ENCODE measurements at regions of chr11 and their contacts with region 1.

Region 1: GRCh38 chr11:60615497-60615896 is 83.9 kb upstream of the MS4A8 start:
- DNase-seq: no peak
- ATAC-seq: no peak
- H3K4me3 ChIP-seq: no peak overlapping the region
- H3K27ac ChIP-seq: no peak overlapping the region
- H3K4me1 ChIP-seq: peaks cover 0 to 6% of the 10 kb centered on the region in 2 experiments; a peak in 2 of 4 replicates
- H3K27me3 ChIP-seq: no peaks in the 10 kb centered on the region
- CTCF ChIP-seq: no peak
- POLR2A ChIP-seq: no peak
- RAD21 ChIP-seq: no peak

Region 2: GRCh38 chr11:60345489-60345888 is 270.0 kb before region 1 on chr11:
- CTCF ChIA-PET with region 1: interaction called, 4 read pairs
- POLR2A ChIA-PET with region 1: no interaction called
- RAD21 ChIA-PET with region 1: no interaction called
- intact Hi-C with region 1: loop called (anchors 5 kb)
- DNase-seq: peak; percentile 21
- ATAC-seq: peak; percentile 78
- H3K4me3 ChIP-seq: no peak overlapping the region
- H3K27ac ChIP-seq: no peak overlapping the region
- H3K4me1 ChIP-seq: no peaks in the 10 kb centered on the region
- H3K27me3 ChIP-seq: no peaks in the 10 kb centered on the region; the same call in 1 of the 2 replicates
- CTCF ChIP-seq: peak; percentile 41 to 76 (median 75); a peak in 5 of 6 replicates
- POLR2A ChIP-seq: no peak
- RAD21 ChIP-seq: peak; percentile 39

Region 3: DNA sequence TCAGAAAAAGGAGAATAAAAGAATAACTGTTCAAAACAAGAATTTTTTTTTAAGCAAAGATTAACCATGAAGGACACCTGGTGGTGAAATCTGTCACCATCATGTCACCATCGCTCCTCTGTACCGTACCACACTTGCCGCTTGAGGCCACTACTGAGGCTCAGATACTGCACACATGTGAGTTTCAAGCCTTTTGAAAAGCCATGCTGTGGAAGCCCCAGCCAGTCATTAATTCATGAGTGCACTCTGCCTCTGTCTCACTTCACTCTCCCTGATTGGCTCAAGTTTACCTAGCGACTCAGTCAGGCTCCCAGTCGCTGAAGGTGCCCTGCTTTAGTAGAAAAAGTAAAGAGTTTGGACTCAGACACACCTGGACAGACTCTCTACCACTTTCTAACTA is 129.5 kb before region 1 on chr11:
- CTCF ChIA-PET with region 1: interaction called, 4 read pairs
- POLR2A ChIA-PET with region 1: no interaction called
- RAD21 ChIA-PET with region 1: no interaction called
- intact Hi-C with region 1: loop called (anchors 5 kb)
- DNase-seq: peak; percentile 79
- ATAC-seq: peak; percentile 100
- H3K4me3 ChIP-seq: no peak overlapping the region
- H3K27ac ChIP-seq: no peak overlapping the region
- H3K4me1 ChIP-seq: peaks cover 0 to 2% of the 10 kb centered on the region in 2 experiments; a peak in 1 of 4 replicates
- H3K27me3 ChIP-seq: no peaks in the 10 kb centered on the region
- CTCF ChIP-seq: peak; percentile 85 to 98 (median 90)
- POLR2A ChIP-seq: no peak
- RAD21 ChIP-seq: peak; percentile 74

Region 4: DNA sequence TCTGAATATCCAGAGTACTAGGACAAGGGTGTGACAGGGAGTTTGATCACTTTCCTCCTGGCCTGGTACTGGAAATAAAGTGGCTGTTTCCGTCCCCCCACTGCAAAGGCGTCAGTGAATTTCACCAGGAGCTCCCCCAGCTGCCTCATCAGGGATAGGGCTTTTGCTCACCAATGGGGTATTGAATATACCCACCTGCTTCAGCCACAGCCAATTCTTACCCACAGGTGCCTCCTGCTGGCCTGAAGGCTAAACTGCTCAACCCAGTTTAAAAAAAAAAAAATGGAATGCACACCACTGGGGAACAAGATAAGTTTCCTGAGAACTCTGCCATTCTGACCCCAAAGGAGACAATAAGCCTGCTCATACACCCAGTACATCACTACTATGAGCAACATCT is 18.6 kb after region 1 on chr11:
- CTCF ChIA-PET with region 1: no interaction called
- POLR2A ChIA-PET with region 1: no interaction called
- RAD21 ChIA-PET with region 1: no interaction called
- intact Hi-C with region 1: no loop called
- DNase-seq: peak; percentile 1
- ATAC-seq: peak; percentile 47
- H3K4me3 ChIP-seq: no peak overlapping the region
- H3K27ac ChIP-seq: no peak overlapping the region
- H3K4me1 ChIP-seq: no peaks in the 10 kb centered on the region
- H3K27me3 ChIP-seq: no peaks in the 10 kb centered on the region
- CTCF ChIP-seq: peak in 2 of 3 experiments; percentile 36 to 50; a peak in 4 of 6 replicates
- POLR2A ChIP-seq: no peak
- RAD21 ChIP-seq: peak; percentile 24; the same call in 1 of the 2 replicates

Region 5: GRCh38 chr11:60739114-60739513 is 123.6 kb after region 1 on chr11:
- CTCF ChIA-PET with region 1: no interaction called
- POLR2A ChIA-PET with region 1: no interaction called
- RAD21 ChIA-PET with region 1: no interaction called
- intact Hi-C with region 1: no loop called
- DNase-seq: no peak
- ATAC-seq: peak; percentile 61; the same call in 1 of the 2 replicates
- H3K4me3 ChIP-seq: no peak overlapping the region
- H3K27ac ChIP-seq: no peak overlapping the region
- H3K4me1 ChIP-seq: no peaks in the 10 kb centered on the region
- H3K27me3 ChIP-seq: peaks cover 9% of the 10 kb centered on the region; the same call in 1 of the 2 replicates
- CTCF ChIP-seq: peak in 2 of 3 experiments; percentile 23 to 34; a peak in 2 of 6 replicates
- POLR2A ChIP-seq: no peak
- RAD21 ChIP-seq: no peak